ENCODE measurements at regions of chr2 and their contacts with region 1.

Region 1: DNA sequence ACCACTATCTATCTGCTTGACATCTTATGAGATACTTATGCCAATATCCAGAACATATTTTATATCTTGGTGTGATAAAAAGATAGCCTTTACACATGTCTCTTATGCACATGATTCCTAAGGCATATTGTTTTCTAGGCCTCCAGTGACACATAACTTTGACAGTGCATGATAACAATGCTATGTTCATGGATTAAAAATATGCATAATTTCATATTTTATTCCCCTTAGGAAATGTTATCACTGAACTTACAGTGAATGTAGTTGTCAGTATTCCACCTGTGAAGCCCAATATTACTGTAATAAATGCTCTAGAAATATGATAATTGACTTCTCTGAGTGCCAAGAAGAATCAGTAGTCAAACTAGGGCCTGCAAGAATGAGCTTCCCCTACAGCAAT is 532.3 kb downstream of the SPAG16 start:
- DNase-seq: no peak
- H3K4me3 ChIP-seq: no peak overlapping the region
- H3K27ac ChIP-seq: no peak overlapping the region
- H3K4me1 ChIP-seq: no peaks in the 10 kb centered on the region
- H3K27me3 ChIP-seq: no peaks in the 10 kb centered on the region
- CTCF ChIP-seq: no peak

Region 2: DNA sequence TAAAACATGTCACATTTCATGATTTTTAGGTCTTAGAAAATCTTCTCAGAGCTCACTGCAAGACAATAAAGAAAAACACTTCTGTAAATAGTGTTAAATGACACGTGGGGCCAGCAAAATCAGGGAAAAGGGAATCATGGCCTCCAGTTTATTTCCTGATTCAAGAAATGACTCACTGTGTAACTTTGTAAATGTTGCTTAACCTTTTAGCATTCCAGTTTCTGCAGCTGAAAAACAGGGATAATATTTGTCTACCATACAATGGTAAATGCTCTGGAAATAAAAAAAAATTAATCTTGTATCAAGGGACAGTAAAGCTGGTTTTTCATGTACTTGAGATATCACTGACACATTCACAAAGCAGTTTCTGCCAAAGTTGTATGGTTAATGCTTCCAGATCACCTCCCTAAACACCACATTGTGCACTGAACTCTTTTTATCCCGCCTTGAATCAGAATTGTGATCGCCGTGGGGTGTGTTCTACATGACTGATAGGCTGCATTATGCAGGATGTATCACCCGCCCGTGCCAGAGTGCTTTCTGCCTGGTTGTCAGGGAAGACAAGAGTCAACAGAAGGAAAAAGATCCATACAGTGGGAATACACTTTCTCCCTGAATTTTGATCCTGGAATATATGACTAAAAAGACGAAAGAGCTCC is 904.0 kb before region 1 on chr2:
- CTCF ChIA-PET with region 1: no interaction called
- POLR2A ChIA-PET with region 1: no interaction called
- intact Hi-C with region 1: no loop called
- DNase-seq: peak; percentile 69 to 94
- H3K4me3 ChIP-seq: peak overlapping the region; percentile 54; the same call in 1 of the 2 replicates
- H3K27ac ChIP-seq: peak overlapping the region; percentile 100
- H3K4me1 ChIP-seq: peaks cover 76% of the 10 kb centered on the region
- H3K27me3 ChIP-seq: no peaks in the 10 kb centered on the region
- CTCF ChIP-seq: no peak

Region 3: DNA sequence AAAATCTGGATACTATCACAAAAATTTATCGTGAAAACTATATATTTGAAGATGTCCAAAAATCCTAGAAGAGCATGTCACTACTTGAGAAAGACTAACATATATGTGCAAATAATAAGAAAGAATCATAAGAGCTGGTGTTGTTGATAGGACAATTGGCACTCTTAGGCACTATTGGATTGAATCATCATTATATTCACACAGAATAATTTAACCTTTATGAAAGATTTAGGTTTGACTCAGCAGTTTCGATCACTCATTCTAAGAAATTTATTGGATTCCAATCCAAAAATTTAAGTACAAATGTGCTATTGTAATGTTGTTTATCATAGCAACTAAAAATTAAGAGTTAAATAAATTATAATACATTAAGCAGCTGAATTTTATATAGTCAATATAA is 28.7 kb before region 1 on chr2:
- CTCF ChIA-PET with region 1: no interaction called
- POLR2A ChIA-PET with region 1: no interaction called
- intact Hi-C with region 1: no loop called
- DNase-seq: no peak
- H3K4me3 ChIP-seq: no peak overlapping the region
- H3K27ac ChIP-seq: no peak overlapping the region
- H3K4me1 ChIP-seq: no peaks in the 10 kb centered on the region
- H3K27me3 ChIP-seq: no peaks in the 10 kb centered on the region
- CTCF ChIP-seq: no peak

Region 4: GRCh38 chr2:214896274-214896673 is 1079.7 kb after region 1 on chr2:
- CTCF ChIA-PET with region 1: no interaction called
- POLR2A ChIA-PET with region 1: interaction called, 10 read pairs
- intact Hi-C with region 1: no loop called
- DNase-seq: peak in 1 of 2 experiments; percentile 9
- H3K4me3 ChIP-seq: no peak overlapping the region
- H3K27ac ChIP-seq: no peak overlapping the region
- H3K4me1 ChIP-seq: no peaks in the 10 kb centered on the region
- H3K27me3 ChIP-seq: no peaks in the 10 kb centered on the region
- CTCF ChIP-seq: no peak